ENCODE measurements at regions of chr11 and their contacts with region 1.

Region 1: DNA sequence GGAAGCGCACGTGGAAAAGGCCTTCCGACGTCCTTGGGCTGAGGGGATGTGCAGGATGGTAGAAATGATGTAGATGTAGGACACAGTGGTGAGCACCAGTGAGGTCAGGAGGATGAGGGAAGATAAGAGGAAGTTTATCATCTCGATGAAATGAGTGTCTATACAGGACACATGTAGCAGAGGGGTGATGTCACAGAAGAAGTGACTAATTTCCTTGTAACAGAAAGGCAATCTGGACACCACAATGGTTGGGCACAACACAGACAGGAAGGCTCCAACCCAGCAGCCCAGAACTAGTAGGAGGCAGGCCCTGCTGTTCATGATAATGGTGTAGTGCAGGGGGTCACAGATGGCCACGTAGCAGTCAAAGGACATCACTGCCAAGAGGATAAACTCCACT is 35.0 kb upstream of the OR6M1 start:
- DNase-seq: no peak
- H3K27ac ChIP-seq: no peak overlapping the region
- CTCF ChIP-seq: no peak

Region 2: DNA sequence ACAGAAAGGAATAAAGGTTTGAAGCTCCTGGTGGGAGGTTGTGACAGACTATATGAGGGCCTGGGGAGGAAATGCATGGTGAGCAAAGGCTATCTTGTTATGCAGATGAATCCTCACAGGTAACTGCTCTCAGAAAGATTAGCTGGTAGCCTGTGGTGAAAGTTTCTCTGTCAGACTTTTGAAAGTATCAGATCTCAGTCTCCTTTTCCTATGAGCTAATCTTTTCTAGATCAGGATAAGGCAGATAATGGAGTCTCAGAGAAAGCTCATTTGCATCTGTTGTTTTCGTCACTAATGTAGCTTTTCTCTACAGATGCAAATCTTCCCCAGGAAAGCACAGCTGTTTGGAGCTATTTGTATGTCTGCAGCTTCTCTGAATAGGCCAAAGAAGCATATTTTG is 65.9 kb before region 1 on chr11:
- CTCF ChIA-PET with region 1: no interaction called
- POLR2A ChIA-PET with region 1: no interaction called
- DNase-seq: no peak
- H3K27ac ChIP-seq: no peak overlapping the region
- CTCF ChIP-seq: no peak

Region 3: DNA sequence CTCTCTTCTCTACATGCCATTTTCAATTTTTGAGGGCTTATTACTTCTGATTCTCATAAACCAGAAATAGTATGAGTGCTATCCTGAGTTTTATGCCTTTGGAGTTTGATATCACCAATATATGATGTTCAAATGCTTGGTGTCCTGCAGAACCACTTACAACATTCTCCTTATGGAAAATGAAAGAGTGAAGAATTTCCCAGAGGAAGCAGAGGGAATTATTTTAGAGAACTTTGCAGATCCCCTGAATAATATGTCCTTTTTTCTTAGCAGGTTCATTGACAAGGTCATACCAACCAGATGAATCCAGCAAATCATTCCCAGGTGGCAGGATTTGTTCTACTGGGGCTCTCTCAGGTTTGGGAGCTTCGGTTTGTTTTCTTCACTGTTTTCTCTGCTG is 98.1 kb after region 1 on chr11 and contains the start of gene OR4D5:
- CTCF ChIA-PET with region 1: no interaction called
- POLR2A ChIA-PET with region 1: no interaction called
- DNase-seq: no peak
- H3K27ac ChIP-seq: no peak within 1 kb of the TSS
- CTCF ChIP-seq: no peak

Region 4: DNA sequence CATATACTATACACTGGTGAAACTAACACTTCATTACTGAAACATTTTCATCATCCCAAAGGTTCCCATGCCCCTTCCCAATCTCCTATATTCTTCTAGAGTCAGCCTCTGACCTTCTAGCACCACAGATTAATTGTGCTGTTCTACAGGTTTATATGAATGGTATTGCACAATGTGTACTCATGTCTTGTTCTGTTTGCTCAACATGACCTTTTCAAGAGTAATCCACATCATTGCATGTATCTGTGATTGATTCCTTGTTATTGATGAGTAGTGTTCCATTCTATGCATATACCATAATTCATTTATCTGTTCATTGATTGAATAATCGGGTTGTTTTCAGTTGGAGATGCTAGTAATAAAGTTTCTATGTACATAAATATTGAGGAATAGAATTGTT is 392.2 kb after region 1 on chr11:
- CTCF ChIA-PET with region 1: no interaction called
- POLR2A ChIA-PET with region 1: interaction called, 11 read pairs
- DNase-seq: no peak
- H3K27ac ChIP-seq: no peak overlapping the region
- CTCF ChIP-seq: no peak

Measured in RWPE1 (cell line).